Activated CD4-positive, alpha-beta T cell treated with anti-CD3 and anti-CD28 coated beads for 36 hours (primary cell): ENCODE measurements at regions of chr1 and their contacts with region 1.

Region 1: GRCh38 chr1:100459358-100460114 is 78.4 kb upstream of the GPR88 start:
- DNase-seq: peak; percentile 86
- ATAC-seq: peak; percentile 85
- H3K4me3 Mint-ChIP-seq: no peak overlapping the region
- H3K27ac Mint-ChIP-seq: no peak overlapping the region
- H3K4me1 Mint-ChIP-seq: peaks cover 50% of the 10 kb centered on the region
- H3K27me3 Mint-ChIP-seq: no peaks in the 10 kb centered on the region

Region 2: GRCh38 chr1:99969729-99970621 is 489.6 kb before region 1 on chr1 and contains the start of gene SLC35A3:
- CTCF ChIA-PET with region 1: interaction called, 3 read pairs
- POLR2A ChIA-PET with region 1: no interaction called
- intact Hi-C with region 1: loop called in 1 of 2 experiments (anchors 5 kb)
- DNase-seq: peak; percentile 89
- ATAC-seq: peak; percentile 89
- H3K4me3 Mint-ChIP-seq: peak within 1 kb of the TSS; percentile 100
- H3K27ac Mint-ChIP-seq: peak within 1 kb of the TSS; percentile 94
- H3K4me1 Mint-ChIP-seq: peaks cover 26% of the 10 kb centered on the region
- H3K27me3 Mint-ChIP-seq: no peaks in the 10 kb centered on the region
- total RNA-seq, gene SLC35A3: 11.2 to 13.4 TPM

Region 3: DNA sequence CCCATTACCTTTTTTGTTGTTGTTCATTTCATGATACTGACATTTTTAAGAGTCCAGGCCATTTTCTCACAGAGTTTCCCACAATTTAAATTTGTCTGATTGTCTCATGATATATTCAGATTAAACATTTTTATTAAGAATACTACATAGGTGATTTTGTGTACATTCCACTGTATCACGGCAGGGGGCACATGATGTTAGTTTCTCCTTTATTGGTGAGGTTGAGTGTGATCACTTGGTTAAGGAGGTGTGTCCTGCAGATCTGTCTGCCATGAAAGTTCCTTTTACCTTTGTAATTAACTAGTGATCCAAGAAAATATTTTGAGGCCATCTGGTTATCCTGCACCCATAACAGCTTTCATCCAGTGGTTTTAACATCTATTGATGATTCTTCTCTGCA is 181.7 kb before region 1 on chr1:
- CTCF ChIA-PET with region 1: interaction called, 5 read pairs
- POLR2A ChIA-PET with region 1: no interaction called
- intact Hi-C with region 1: loop called in 1 of 2 experiments (anchors 2 kb)
- DNase-seq: peak; percentile 37
- ATAC-seq: peak; percentile 47
- H3K4me3 Mint-ChIP-seq: no peak overlapping the region
- H3K27ac Mint-ChIP-seq: peak overlapping the region; percentile 16
- H3K4me1 Mint-ChIP-seq: peaks cover 13% of the 10 kb centered on the region
- H3K27me3 Mint-ChIP-seq: no peaks in the 10 kb centered on the region

Region 4: GRCh38 chr1:100358210-100358609 is 101.3 kb before region 1 on chr1:
- CTCF ChIA-PET with region 1: interaction called, 44 read pairs
- POLR2A ChIA-PET with region 1: interaction called, 5 read pairs
- intact Hi-C with region 1: no loop called
- DNase-seq: peak; percentile 41
- ATAC-seq: no peak
- H3K4me3 Mint-ChIP-seq: no peak overlapping the region
- H3K27ac Mint-ChIP-seq: peak overlapping the region; percentile 61
- H3K4me1 Mint-ChIP-seq: peaks cover 79% of the 10 kb centered on the region
- H3K27me3 Mint-ChIP-seq: no peaks in the 10 kb centered on the region

Region 5: GRCh38 chr1:100430325-100430813 is 29.2 kb before region 1 on chr1:
- CTCF ChIA-PET with region 1: interaction called, 24 read pairs
- POLR2A ChIA-PET with region 1: no interaction called
- intact Hi-C with region 1: no loop called
- DNase-seq: no peak
- ATAC-seq: no peak
- H3K4me3 Mint-ChIP-seq: no peak overlapping the region
- H3K27ac Mint-ChIP-seq: peak overlapping the region; percentile 10
- H3K4me1 Mint-ChIP-seq: peaks cover 66% of the 10 kb centered on the region
- H3K27me3 Mint-ChIP-seq: no peaks in the 10 kb centered on the region

Region 6: GRCh38 chr1:100543640-100544039 is 84.1 kb after region 1 on chr1:
- CTCF ChIA-PET with region 1: interaction called, 5 read pairs
- POLR2A ChIA-PET with region 1: no interaction called
- intact Hi-C with region 1: loop called (anchors 2 kb)
- DNase-seq: peak; percentile 67
- ATAC-seq: peak; percentile 87
- H3K4me3 Mint-ChIP-seq: no peak overlapping the region
- H3K27ac Mint-ChIP-seq: no peak overlapping the region
- H3K4me1 Mint-ChIP-seq: peaks cover 6% of the 10 kb centered on the region
- H3K27me3 Mint-ChIP-seq: peaks cover 25% of the 10 kb centered on the region

Region 7: DNA sequence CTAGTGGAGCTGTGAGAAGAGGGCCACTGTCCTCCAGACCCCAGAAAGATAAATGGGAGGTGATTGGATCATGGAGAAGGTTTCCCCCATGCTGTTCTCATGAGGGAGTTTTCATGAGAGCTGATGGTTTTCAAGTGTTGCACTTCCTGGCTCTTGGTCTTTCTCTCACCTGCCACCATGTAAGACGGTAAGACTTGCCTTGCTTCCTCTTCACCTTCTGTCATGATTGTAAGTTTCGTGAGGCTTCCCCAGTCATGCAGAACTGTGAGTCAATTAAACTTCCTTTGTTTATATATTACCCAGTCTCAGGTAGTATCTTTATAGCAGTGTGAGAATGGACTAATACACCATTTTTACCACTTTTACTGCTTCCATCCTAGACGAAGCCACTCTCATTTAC is 106.0 kb after region 1 on chr1:
- CTCF ChIA-PET with region 1: no interaction called
- POLR2A ChIA-PET with region 1: no interaction called
- intact Hi-C with region 1: no loop called
- DNase-seq: no peak
- ATAC-seq: no peak
- H3K4me3 Mint-ChIP-seq: no peak overlapping the region
- H3K27ac Mint-ChIP-seq: no peak overlapping the region
- H3K4me1 Mint-ChIP-seq: no peaks in the 10 kb centered on the region
- H3K27me3 Mint-ChIP-seq: peaks cover 13% of the 10 kb centered on the region